ENCODE measurements at regions of chr2 and their contacts with region 1.

Region 1: DNA sequence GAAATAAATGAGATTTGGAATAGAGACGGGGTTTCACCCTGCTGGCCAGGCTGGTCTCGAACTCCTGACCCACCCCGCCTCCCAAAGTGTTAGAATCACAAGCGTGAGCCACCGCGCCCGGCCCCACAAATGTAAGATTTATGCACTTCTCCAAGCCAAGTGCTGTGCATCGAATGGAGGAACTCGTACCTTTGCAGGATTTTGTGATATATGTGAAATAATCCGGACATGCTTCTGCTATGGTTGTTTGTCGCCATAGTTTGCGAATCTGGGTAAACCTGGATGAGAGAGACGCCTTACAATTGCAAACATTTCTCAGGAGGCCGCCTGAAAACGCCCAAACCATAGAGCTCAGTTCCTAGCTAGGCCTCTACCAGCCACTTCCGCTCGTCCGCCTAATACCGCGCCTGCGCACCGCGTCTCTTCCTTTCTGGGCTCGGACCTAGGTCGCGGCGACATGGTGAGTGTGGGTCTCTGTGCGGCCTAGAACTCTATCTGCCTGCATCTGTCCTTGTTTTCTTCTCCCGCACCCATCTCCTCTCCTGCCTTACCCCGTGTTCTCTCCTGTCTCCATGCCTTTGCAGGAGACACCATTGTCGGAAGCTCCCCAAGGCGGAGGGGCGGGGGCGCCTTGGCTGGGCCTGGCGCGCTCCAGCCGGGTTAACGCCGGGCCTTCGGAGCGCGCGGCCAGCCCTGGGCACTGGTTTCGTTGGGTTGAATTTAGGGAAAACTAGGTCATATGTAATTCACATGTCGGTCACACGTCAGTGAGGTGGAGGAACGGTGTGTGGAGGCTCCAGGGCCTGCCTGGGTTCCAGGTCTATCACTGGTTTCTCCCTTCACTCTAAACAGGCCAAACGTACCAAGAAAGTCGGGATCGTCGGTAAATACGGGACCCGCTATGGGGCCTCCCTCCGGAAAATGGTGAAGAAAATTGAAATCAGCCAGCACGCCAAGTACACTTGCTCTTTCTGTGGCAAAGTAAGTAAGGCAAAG is at the start of gene RPL37A:
- DNase-seq: peak; percentile 92

Region 2: GRCh38 chr2:215793747-215794595 is 704.7 kb before region 1 on chr2:
- CTCF ChIA-PET with region 1: no interaction called
- POLR2A ChIA-PET with region 1: no interaction called
- DNase-seq: no peak

Region 3: GRCh38 chr2:216486708-216487107 is 12.0 kb before region 1 on chr2:
- CTCF ChIA-PET with region 1: no interaction called
- POLR2A ChIA-PET with region 1: interaction called, 16 read pairs
- DNase-seq: no peak

Region 4: DNA sequence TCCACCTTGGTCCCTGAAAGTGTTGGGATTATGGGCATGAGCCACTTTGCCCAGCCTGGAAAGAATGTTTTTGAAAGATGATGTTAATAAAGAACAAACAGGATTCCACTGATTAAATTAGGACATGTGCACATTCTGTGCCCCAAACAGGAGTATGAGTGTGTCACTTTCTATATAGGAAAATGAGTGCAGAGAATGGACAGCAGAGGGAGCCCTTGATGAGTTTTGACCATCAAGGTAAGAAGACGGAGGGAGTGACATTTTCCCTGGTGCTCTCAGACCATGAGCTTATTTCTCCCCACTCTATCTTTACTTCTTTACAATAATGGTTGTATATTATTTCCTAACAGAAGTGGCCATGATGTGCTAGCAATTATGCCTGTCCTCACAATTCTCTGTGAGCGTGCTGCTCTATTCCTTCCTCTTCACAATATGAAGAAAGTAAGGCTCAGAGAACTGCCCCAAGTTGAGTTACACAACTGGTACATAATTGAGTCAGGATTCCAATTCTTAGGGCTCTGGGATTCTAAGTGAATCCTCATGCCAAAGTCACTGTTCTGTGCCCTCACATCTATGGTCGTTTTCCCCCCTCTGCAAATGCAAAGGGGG is 20.5 kb after region 1 on chr2:
- CTCF ChIA-PET with region 1: no interaction called
- POLR2A ChIA-PET with region 1: interaction called, 13 read pairs
- DNase-seq: peak; percentile 65

Measured in HEK293T (cell line).